ENCODE measurements at regions of chr2 and their contacts with region 1.

Region 1: DNA sequence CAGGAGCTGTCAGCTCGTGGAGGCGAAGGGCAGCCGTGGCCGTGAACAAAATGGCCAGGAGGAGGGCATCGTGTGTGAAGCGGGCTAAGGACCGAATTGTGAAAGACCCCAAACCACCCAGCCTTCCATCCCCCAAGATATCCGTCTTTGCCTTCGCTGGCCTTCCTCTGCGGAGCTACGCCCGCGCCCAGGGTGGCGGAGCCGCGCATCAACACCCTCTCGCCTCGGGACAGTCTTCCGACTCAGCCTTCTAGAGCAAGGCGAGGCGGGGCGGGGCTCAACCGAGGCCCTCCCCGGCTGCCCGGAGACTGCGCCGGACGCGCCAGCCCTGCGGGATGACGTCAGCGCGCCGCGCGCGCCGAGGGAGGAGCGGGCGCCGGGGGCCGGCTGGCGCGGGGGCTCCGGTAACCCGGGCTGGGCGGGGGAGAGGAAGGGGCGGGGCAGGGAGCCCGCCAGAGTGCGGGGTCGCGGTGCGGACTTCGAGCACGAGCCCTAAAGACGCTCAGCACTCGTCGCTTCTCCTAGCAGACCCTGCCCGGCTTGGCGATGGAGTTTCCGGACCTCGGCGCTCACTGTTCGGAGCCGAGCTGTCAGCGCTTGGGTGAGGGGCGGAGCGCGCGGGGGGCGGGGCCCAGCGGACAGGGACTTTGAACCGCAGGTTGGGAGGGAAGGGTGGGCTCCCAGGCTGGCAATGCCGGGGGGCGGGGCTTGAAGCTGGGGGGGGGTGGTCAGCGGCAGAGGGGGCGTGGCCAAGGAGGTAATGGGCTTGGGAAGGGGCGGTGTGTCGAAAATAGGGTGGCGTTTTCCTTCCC is at the start of gene ZFAND2B:
- DNase-seq: peak; percentile 86
- ATAC-seq: peak; percentile 83
- H3K4me3 ChIP-seq: peak within 1 kb of the TSS; percentile 65 to 86 (median 74)
- H3K27ac ChIP-seq: peak within 1 kb of the TSS; percentile 95
- H3K4me1 ChIP-seq: peaks cover 54% of the 10 kb centered on the region
- H3K27me3 ChIP-seq: no peaks in the 10 kb centered on the region; a peak in 1 of 5 replicates
- CTCF ChIP-seq: no peak; the same call in 1 of the 2 replicates
- EP300 ChIP-seq: peak in 1 of 2 experiments; percentile 4; a peak in 1 of 4 replicates
- POLR2A ChIP-seq: peak in 1 of 2 experiments; percentile 97; a peak in 2 of 4 replicates
- RAD21 ChIP-seq: no peak; the same call in none of the 2 replicates
- total RNA-seq, gene ZFAND2B: 39.4 and 53.3 TPM in 2 replicates

Region 2: GRCh38 chr2:219171231-219171651 is 35.4 kb before region 1 on chr2:
- CTCF ChIA-PET with region 1: interaction called, 17 read pairs
- POLR2A ChIA-PET with region 1: interaction called, 227 read pairs
- in situ Hi-C with region 1: loop called (anchors 5 kb)
- intact Hi-C with region 1: loop called (anchors 1 kb)
- DNase-seq: peak; percentile 62
- ATAC-seq: peak; percentile 54
- H3K4me3 ChIP-seq: no peak overlapping the region
- H3K27ac ChIP-seq: no peak overlapping the region
- H3K4me1 ChIP-seq: peaks cover 33% of the 10 kb centered on the region
- H3K27me3 ChIP-seq: peaks cover 0 to 2% of the 10 kb centered on the region in 2 experiments; a peak in 1 of 5 replicates
- CTCF ChIP-seq: peak; percentile 72
- EP300 ChIP-seq: no peak
- POLR2A ChIP-seq: no peak
- RAD21 ChIP-seq: peak; percentile 58

Region 3: GRCh38 chr2:219218732-219219701 is 12.4 kb after region 1 on chr2 and contains the start of gene ABCB6:
- CTCF ChIA-PET with region 1: no interaction called
- POLR2A ChIA-PET with region 1: interaction called, 196 read pairs
- in situ Hi-C with region 1: no loop called
- intact Hi-C with region 1: loop called (anchors 1 kb)
- DNase-seq: peak; percentile 93
- ATAC-seq: peak; percentile 79
- H3K4me3 ChIP-seq: peak within 1 kb of the TSS; percentile 80 to 92 (median 85)
- H3K27ac ChIP-seq: peak within 1 kb of the TSS; percentile 92
- H3K4me1 ChIP-seq: peaks cover 43% of the 10 kb centered on the region
- H3K27me3 ChIP-seq: no peaks in the 10 kb centered on the region
- CTCF ChIP-seq: 0 out of 2 replicates have a peak, but pooled peaks have one; percentile 20
- EP300 ChIP-seq: no peak; a peak in 1 of 4 replicates
- POLR2A ChIP-seq: peak in 1 of 2 experiments; percentile 94; a peak in 2 of 4 replicates
- RAD21 ChIP-seq: no peak
- total RNA-seq, gene ABCB6: 51.3 and 137 TPM in 2 replicates

Region 4: DNA sequence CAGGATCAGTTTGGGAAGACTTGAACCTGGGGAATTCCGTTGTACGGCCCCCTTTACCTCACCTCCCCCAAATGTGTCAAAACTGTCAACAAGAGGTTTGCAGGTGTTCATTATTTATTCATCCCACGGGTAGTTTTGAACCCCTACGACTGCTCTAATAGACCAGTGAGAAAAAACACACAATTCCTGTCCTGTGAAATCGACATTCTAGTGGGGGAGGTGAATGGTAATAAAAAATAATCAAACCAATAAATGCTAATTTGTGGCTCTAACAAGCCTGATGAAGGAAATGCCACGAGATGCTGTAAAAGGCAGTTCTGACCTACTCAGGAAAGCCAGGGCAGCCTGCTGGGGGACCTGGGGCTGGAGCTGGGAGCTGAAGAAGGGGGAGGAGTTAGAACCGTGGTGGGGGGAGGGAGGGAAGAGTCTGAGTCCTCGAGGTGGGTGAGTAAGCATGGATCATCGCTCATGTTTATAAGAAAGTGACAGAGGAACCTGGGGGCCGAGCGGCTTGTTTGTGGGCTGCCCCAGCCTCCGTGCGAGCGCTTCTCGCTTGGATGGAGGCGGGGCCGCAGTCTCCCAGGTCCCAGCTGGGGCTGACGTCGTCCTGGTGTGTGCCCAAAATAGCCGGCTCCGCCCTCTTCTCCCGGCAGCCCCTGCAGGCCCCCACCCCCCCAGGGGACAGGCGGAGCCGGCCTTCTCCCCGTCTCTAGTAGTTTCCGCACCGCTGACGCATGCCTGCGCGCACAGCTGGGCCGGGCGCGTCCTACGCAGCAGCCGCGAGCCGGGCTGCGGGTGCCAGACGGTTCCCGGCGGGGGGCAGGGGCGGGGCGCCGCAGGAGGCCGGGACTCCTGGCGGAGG is 72.2 kb after region 1 on chr2 and contains the start of gene DNAJB2:
- CTCF ChIA-PET with region 1: no interaction called
- POLR2A ChIA-PET with region 1: interaction called, 29 read pairs
- in situ Hi-C with region 1: no loop called
- intact Hi-C with region 1: no loop called
- DNase-seq: peak; percentile 93
- ATAC-seq: peak; percentile 92
- H3K4me3 ChIP-seq: peak within 1 kb of the TSS; percentile 59 to 77 (median 73)
- H3K27ac ChIP-seq: peak within 1 kb of the TSS; percentile 62
- H3K4me1 ChIP-seq: peaks cover 37% of the 10 kb centered on the region
- H3K27me3 ChIP-seq: 0 out of 5 replicates have a peak, but pooled peaks cover 0 to 5% of the 10 kb centered on the region in 2 experiments
- CTCF ChIP-seq: no peak; the same call in 1 of the 2 replicates
- EP300 ChIP-seq: no peak; a peak in 1 of 4 replicates
- POLR2A ChIP-seq: peak; percentile 52 to 79; a peak in 3 of 4 replicates
- RAD21 ChIP-seq: no peak
- total RNA-seq, gene DNAJB2: 18.6 and 21.3 TPM in 2 replicates

Region 5: DNA sequence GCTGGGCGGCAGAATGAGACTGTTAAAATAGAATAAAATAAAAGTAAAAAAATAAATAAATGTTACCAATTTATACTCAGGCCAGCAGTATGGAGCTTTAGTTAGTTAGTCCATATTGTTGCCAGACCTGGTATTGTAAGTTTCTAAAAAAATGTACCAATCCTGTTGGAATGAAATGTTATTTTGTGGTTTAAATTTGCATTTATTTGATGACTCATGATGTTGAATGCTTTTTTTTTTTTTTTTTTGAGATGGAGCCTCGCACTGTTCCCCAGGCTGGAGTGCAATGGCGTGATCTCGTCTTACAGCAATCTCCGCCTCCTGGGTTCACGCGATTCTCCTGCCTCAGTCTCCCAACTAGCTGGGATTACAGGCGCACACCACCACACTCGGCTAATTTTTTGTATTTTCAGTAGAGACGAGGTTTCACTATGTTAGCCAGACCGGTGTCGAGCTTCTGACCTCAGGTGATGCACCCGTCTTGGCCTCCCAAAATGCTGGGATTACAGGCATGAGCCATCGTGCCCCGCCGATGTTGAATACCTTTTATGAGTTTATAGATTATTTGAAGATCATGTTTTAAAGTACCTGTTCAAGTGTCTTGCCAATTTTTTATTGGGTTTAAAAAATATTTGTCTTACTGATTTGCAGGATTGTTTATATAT is 108.3 kb after region 1 on chr2:
- CTCF ChIA-PET with region 1: no interaction called
- POLR2A ChIA-PET with region 1: no interaction called
- in situ Hi-C with region 1: no loop called
- intact Hi-C with region 1: no loop called
- DNase-seq: no peak
- ATAC-seq: no peak
- H3K4me3 ChIP-seq: no peak overlapping the region
- H3K27ac ChIP-seq: no peak overlapping the region
- H3K4me1 ChIP-seq: no peaks in the 10 kb centered on the region
- H3K27me3 ChIP-seq: peaks cover 1 to 13% of the 10 kb centered on the region in 2 experiments; a peak in 3 of 5 replicates
- CTCF ChIP-seq: no peak
- EP300 ChIP-seq: no peak
- POLR2A ChIP-seq: no peak
- RAD21 ChIP-seq: no peak

Measured in HepG2 (cell line).